Right ventricle myocardium inferior (tissue), 1 donor: ENCODE measurements at regions of chr2 and their contacts with region 1.

Region 1: GRCh38 chr2:235135990-235136561 is 184.3 kb downstream of the SH3BP4 start:
- DNase-seq: peak; percentile 84
- ATAC-seq: peak; percentile 80

Region 2: GRCh38 chr2:235291461-235291860 is 155.4 kb after region 1 on chr2:
- intact Hi-C with region 1: no loop called
- DNase-seq: no peak
- ATAC-seq: no peak

Region 3: DNA sequence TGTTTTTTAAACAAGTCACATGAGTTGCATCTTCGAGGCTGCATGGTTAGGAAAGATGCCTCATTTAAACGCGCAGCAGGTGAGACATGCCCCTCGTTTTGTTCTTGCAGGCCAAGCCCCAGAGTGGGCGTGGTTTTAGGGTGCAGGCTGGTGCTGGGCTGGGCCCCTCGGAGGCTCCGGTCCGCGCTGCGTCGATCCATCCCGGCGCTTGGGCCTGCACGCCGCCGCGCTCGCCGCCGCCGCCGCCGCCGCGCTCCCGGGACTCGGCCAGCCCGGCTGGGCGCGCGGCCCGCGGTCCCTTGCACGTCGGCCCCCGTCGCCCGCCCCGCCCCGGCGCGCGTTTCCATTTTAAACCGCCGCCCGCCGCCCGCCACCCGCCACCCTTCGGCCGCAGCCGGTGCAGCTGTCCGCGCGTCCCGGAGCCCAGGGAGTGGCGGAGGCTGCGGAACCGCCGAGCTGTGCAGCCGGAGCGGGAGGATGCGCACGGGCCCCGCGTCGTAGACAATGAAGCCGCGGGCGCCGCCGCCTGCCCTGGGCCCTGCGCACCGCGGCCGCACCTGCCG is 533.3 kb after region 1 on chr2:
- intact Hi-C with region 1: loop called (anchors 10 kb)
- DNase-seq: peak; percentile 80
- ATAC-seq: peak; percentile 73